ENCODE measurements at regions of chrX and their contacts with region 1.

Region 1: DNA sequence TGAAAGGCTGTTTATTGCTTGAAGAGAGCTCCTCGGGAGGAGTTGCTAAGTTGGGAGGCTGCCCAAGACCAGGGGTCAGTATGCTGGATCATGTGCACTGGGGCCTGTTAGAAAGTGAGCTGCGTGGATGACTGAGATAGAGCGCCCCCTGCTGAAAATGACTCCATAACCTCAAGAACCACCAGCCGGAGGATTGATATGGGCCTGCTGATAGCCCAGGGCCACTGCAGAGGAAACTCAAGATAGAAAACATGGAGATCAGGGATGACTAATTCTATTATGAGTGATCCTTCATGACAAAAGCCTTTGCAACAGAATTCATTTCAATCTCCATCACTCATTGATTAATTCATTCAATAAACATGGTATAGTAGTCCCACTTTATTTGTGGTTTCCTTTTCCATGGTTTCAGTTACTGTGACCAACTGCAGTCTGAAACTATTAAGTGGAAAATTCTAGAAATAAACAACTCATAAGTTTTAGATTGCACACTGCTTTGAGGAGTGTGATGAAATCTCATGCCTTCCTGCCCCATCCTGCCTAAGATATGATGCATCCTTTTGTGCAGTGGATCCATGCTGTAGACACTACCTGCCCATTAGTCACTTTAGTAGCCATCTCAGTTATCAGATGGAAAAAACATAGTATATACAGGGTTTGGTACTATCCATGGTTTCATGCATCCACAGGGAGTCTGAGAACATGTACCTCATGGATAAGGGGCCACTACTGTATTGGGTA is 126.7 kb upstream of the MBNL3 start:
- DNase-seq: peak; percentile 23 to 52 (median 33)
- ATAC-seq: peak; percentile 89
- H3K4me3 ChIP-seq: no peak overlapping the region
- H3K27ac ChIP-seq: no peak overlapping the region
- H3K4me1 ChIP-seq: no peaks in the 10 kb centered on the region
- H3K27me3 ChIP-seq: no peaks in the 10 kb centered on the region
- CTCF ChIP-seq: peak; percentile 48 to 66 (median 55)
- EP300 ChIP-seq: no peak
- POLR2A ChIP-seq: no peak
- RAD21 ChIP-seq: peak; percentile 28 to 38

Region 2: DNA sequence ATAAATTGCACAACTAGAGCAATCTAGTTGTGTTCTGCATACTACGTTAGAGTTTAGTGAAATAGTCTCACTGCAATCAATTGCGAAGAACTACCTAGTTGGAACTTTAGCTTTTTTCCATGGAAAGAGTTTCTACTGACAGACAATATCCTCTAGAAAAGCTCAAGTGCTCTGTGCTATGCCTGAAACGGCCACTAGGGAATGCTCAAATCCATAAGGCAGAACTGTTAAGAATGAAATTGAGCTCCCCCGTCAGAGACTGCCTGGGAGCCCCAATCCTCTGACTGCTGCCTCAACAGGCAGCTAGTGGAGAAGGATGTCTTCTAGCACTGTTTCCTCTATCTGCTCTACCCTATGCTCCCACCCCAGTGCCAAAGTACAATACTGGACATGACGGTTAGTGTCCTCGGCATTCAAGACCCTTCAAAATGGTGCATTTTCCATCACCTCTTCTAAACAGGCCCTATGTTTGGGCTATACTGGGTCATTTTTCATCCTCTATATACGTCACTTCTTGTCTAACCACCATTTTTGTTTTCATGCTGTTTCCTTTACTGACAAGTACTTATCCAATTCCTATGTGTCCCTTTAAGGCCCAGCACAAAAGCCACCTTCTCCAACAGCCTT is 523.0 kb before region 1 on chrX:
- CTCF ChIA-PET with region 1: no interaction called
- POLR2A ChIA-PET with region 1: no interaction called
- in situ Hi-C with region 1: loop called (anchors 25 kb)
- intact Hi-C with region 1: loop called (anchors 2 kb)
- DNase-seq: peak; percentile 53 to 77 (median 55)
- ATAC-seq: peak; percentile 96
- H3K4me3 ChIP-seq: no peak overlapping the region
- H3K27ac ChIP-seq: no peak overlapping the region
- H3K4me1 ChIP-seq: no peaks in the 10 kb centered on the region
- H3K27me3 ChIP-seq: no peaks in the 10 kb centered on the region; a peak in 1 of 5 replicates
- CTCF ChIP-seq: peak; percentile 70 to 87 (median 80)
- EP300 ChIP-seq: no peak
- POLR2A ChIP-seq: no peak
- RAD21 ChIP-seq: peak; percentile 50 to 71

Region 3: GRCh38 chrX:132292793-132293192 is 322.8 kb before region 1 on chrX:
- CTCF ChIA-PET with region 1: no interaction called
- POLR2A ChIA-PET with region 1: no interaction called
- in situ Hi-C with region 1: loop called (anchors 25 kb)
- intact Hi-C with region 1: loop called (anchors 2 kb)
- DNase-seq: peak; percentile 33 to 48 (median 38)
- ATAC-seq: peak; percentile 79
- H3K4me3 ChIP-seq: no peak overlapping the region
- H3K27ac ChIP-seq: no peak overlapping the region
- H3K4me1 ChIP-seq: no peaks in the 10 kb centered on the region
- H3K27me3 ChIP-seq: no peaks in the 10 kb centered on the region
- CTCF ChIP-seq: peak; percentile 51 to 61 (median 52)
- EP300 ChIP-seq: no peak
- POLR2A ChIP-seq: no peak
- RAD21 ChIP-seq: peak; percentile 48 to 65; a peak in 3 of 4 replicates

Region 4: GRCh38 chrX:132561485-132561884 is 54.1 kb before region 1 on chrX:
- CTCF ChIA-PET with region 1: no interaction called
- POLR2A ChIA-PET with region 1: no interaction called
- in situ Hi-C with region 1: no loop called
- intact Hi-C with region 1: no loop called
- DNase-seq: no peak
- ATAC-seq: no peak
- H3K4me3 ChIP-seq: no peak overlapping the region
- H3K27ac ChIP-seq: no peak overlapping the region
- H3K4me1 ChIP-seq: no peaks in the 10 kb centered on the region
- H3K27me3 ChIP-seq: no peaks in the 10 kb centered on the region
- CTCF ChIP-seq: no peak
- EP300 ChIP-seq: no peak
- POLR2A ChIP-seq: no peak
- RAD21 ChIP-seq: no peak

Region 5: DNA sequence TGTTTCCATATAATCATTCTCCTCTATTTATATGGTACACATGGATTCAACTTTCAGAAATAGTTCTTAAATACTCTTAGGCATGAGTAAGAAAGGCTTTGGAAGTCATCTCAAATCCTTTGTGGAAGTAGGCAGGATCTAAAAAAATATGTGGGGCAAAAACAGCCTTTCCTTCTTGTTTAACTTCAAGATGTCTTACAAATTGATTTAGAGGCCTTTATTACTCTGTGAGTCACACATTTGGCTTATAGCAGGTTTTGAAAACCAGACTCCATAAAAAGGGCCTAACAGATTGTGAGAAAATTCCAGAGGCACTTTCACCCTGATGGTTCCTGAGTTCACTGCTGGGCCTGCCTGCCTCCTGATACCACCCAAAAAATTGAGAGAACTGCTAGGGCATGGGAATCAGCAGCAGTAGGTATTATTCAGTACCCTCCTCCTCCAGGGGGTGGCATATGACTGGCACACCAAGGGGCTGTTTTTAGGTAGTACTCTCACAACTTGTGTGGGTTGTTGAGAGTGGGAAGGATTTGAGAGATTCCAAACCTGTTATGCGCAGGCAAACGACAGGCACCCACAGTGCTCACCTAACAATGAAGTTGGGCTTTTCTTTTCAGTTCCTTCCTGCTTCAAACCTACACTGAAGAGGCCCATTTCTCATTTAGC is 36.0 kb after region 1 on chrX:
- CTCF ChIA-PET with region 1: no interaction called
- POLR2A ChIA-PET with region 1: no interaction called
- in situ Hi-C with region 1: no loop called
- intact Hi-C with region 1: no loop called
- DNase-seq: no peak
- ATAC-seq: no peak
- H3K4me3 ChIP-seq: no peak overlapping the region
- H3K27ac ChIP-seq: no peak overlapping the region
- H3K4me1 ChIP-seq: no peaks in the 10 kb centered on the region
- H3K27me3 ChIP-seq: no peaks in the 10 kb centered on the region
- CTCF ChIP-seq: no peak
- EP300 ChIP-seq: no peak
- POLR2A ChIP-seq: no peak
- RAD21 ChIP-seq: no peak

Region 6: GRCh38 chrX:134460005-134460861 is 1844.7 kb after region 1 on chrX and contains the start of gene HPRT1:
- CTCF ChIA-PET with region 1: no interaction called
- POLR2A ChIA-PET with region 1: no interaction called
- in situ Hi-C with region 1: no loop called
- intact Hi-C with region 1: no loop called
- DNase-seq: peak; percentile 79 to 86 (median 80)
- ATAC-seq: peak; percentile 92
- H3K4me3 ChIP-seq: peak within 1 kb of the TSS; percentile 90
- H3K27ac ChIP-seq: peak within 1 kb of the TSS; percentile 92
- H3K4me1 ChIP-seq: peaks cover 12 to 14% of the 10 kb centered on the region in 2 experiments; a peak in 4 of 5 replicates
- H3K27me3 ChIP-seq: no peaks in the 10 kb centered on the region
- CTCF ChIP-seq: no peak
- EP300 ChIP-seq: no peak
- POLR2A ChIP-seq: peak; percentile 72
- RAD21 ChIP-seq: no peak
- polyA plus RNA-seq, gene HPRT1: 120 to 121 TPM